Activated naive CD4-positive, alpha-beta T cell treated with anti-CD3 and anti-CD28 coated beads, Interleukin-2, amount 10 ng/mL, durations not matched to agents 7 days and 5 days (primary cell): ENCODE measurements at regions of chr15 and their contacts with region 1.

Region 1: DNA sequence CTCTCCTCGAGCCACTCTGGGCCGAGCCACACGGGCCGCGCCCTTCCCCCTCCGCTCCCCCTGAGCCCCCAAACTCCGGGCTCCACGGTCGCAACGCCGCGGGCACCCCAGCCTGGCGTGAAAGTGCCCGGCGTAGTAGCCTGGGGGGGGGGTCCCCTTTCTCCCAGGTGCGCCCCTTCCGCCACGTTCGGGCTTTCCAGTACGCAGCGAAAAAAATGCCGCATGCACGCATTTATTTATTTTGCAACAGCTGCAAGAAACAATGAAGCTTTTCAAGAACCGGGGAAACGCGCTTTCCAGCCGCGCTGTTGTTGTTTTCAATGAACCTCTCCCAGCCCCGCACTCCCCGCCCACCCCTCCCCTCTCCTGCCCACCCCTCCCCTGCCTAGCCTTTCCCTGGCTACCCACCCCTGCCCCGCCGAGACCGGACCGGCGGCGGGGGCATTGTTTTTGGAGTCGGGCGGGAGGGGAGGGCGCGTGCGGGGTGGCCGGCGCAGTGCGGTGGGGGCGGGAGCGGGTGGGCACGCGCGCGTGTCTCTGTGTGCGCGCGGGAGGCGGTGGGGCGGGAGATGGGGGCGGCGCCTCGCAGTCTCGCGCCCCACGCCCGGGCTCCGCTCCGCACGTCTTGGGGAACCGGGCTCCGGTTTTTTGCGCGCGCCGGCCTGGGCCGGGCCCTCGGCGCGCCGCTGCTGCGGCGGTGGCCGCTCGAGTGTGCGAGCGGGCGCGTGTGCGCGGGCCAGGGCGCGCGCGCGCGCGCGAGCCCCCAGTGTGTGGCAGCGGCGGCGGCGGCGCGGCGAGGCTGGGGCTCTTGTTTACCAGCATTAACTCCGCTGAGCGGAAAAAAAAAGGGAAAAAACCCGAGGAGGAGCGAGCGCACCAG is at the start of gene IGF1R:
- DNase-seq: peak; percentile 87
- H3K4me3 Mint-ChIP-seq: peak within 1 kb of the TSS; percentile 85
- H3K27ac Mint-ChIP-seq: peak within 1 kb of the TSS; percentile 94
- H3K4me1 Mint-ChIP-seq: peaks cover 32% of the 10 kb centered on the region
- H3K27me3 Mint-ChIP-seq: peaks cover 40% of the 10 kb centered on the region

Region 2: GRCh38 chr15:98581715-98582114 is 66.3 kb before region 1 on chr15:
- CTCF ChIA-PET with region 1: interaction called, 11 read pairs
- DNase-seq: no peak
- H3K4me3 Mint-ChIP-seq: no peak overlapping the region
- H3K27ac Mint-ChIP-seq: no peak overlapping the region
- H3K4me1 Mint-ChIP-seq: peaks cover 15% of the 10 kb centered on the region
- H3K27me3 Mint-ChIP-seq: peaks cover 60% of the 10 kb centered on the region

Region 3: GRCh38 chr15:98599909-98600691 is 47.9 kb before region 1 on chr15:
- CTCF ChIA-PET with region 1: interaction called, 10 read pairs
- DNase-seq: peak; percentile 77
- H3K4me3 Mint-ChIP-seq: peak overlapping the region; percentile 83
- H3K27ac Mint-ChIP-seq: peak overlapping the region; percentile 98
- H3K4me1 Mint-ChIP-seq: peaks cover 54% of the 10 kb centered on the region
- H3K27me3 Mint-ChIP-seq: peaks cover 17% of the 10 kb centered on the region